Activated CD4-positive, alpha-beta T cell treated with anti-CD3 and anti-CD28 coated beads for 36 hours (primary cell): ENCODE measurements at regions of chr9 and their contacts with region 1.

Region 1: GRCh38 chr9:87464110-87464965 is 33.3 kb upstream of the DAPK1 start:
- DNase-seq: peak; percentile 66
- ATAC-seq: peak; percentile 89
- H3K4me3 Mint-ChIP-seq: no peak overlapping the region
- H3K27ac Mint-ChIP-seq: peak overlapping the region; percentile 84
- H3K4me1 Mint-ChIP-seq: peaks cover 28% of the 10 kb centered on the region
- H3K27me3 Mint-ChIP-seq: peaks cover 2% of the 10 kb centered on the region

Region 2: DNA sequence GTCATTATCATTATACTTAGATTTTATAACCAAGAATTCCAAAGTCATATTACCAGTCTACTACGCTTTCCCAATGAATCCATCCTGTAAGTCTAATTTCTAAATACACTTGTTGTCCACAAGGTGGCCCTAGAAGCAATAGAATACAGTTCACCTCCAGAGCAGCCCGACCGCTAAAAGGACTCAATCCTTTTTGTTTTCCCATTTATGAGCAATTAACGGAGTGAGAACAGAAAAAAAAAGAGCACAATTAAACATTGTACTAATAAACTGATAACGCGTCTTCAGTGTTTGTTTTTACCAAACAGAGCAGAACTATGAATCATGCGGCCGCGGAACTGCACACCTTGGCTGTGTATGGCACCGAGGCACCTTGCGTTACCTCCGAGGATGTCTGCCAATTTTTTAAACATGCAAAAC is 127.4 kb before region 1 on chr9:
- CTCF ChIA-PET with region 1: interaction called, 3 read pairs
- POLR2A ChIA-PET with region 1: interaction called, 3 read pairs
- intact Hi-C with region 1: loop called in 1 of 2 experiments (anchors 1 kb)
- DNase-seq: peak; percentile 49
- ATAC-seq: peak; percentile 57
- H3K4me3 Mint-ChIP-seq: peak overlapping the region; percentile 41
- H3K27ac Mint-ChIP-seq: peak overlapping the region; percentile 38
- H3K4me1 Mint-ChIP-seq: peaks cover 13% of the 10 kb centered on the region
- H3K27me3 Mint-ChIP-seq: peaks cover 47% of the 10 kb centered on the region

Region 3: DNA sequence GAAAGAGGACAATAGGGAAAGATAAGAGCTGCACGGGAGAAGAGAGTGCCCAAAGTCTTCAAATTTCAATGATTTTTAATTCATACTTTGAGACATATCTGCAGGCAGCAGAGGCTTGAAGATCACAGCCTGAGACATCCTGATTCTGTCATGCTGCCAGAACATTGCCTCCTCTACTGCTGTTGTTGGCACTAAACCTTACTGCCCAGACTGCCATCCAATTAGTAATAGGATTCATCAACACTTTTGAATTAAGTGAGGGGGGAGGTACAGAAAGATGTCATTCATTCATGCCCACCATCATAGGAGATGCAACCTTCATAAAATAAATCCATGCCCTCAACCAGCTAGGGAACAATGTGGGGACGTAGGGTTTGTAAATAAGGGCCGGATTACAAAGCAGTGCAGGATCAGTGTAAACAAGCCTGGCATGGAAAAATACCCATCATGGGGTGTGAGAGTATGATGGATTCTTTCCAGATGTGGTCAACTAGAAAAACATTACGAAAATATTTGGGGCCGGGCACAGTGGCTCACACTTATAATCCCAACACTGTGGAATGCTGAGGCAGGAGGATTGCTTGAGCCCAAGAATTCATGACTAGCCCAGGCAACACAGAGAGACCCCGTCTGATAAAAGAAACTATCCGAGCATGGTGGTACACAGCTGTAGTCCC is 88.8 kb before region 1 on chr9:
- CTCF ChIA-PET with region 1: interaction called, 12 read pairs
- POLR2A ChIA-PET with region 1: interaction called, 3 read pairs
- intact Hi-C with region 1: loop called (anchors 1 kb)
- DNase-seq: no peak
- ATAC-seq: no peak
- H3K4me3 Mint-ChIP-seq: no peak overlapping the region
- H3K27ac Mint-ChIP-seq: no peak overlapping the region
- H3K4me1 Mint-ChIP-seq: peaks cover 15% of the 10 kb centered on the region
- H3K27me3 Mint-ChIP-seq: peaks cover 37% of the 10 kb centered on the region

Region 4: GRCh38 chr9:87497604-87498045 is 33.3 kb after region 1 on chr9 and contains the start of gene DAPK1:
- CTCF ChIA-PET with region 1: interaction called, 5 read pairs
- POLR2A ChIA-PET with region 1: no interaction called
- intact Hi-C with region 1: loop called (anchors 1 to 2 kb)
- DNase-seq: peak; percentile 60
- ATAC-seq: peak; percentile 61
- H3K4me3 Mint-ChIP-seq: peak within 1 kb of the TSS; percentile 70
- H3K27ac Mint-ChIP-seq: no peak within 1 kb of the TSS
- H3K4me1 Mint-ChIP-seq: peaks cover 24% of the 10 kb centered on the region
- H3K27me3 Mint-ChIP-seq: peaks cover 52% of the 10 kb centered on the region
- total RNA-seq, gene DAPK1: 3.9 to 5.6 TPM

Region 5: DNA sequence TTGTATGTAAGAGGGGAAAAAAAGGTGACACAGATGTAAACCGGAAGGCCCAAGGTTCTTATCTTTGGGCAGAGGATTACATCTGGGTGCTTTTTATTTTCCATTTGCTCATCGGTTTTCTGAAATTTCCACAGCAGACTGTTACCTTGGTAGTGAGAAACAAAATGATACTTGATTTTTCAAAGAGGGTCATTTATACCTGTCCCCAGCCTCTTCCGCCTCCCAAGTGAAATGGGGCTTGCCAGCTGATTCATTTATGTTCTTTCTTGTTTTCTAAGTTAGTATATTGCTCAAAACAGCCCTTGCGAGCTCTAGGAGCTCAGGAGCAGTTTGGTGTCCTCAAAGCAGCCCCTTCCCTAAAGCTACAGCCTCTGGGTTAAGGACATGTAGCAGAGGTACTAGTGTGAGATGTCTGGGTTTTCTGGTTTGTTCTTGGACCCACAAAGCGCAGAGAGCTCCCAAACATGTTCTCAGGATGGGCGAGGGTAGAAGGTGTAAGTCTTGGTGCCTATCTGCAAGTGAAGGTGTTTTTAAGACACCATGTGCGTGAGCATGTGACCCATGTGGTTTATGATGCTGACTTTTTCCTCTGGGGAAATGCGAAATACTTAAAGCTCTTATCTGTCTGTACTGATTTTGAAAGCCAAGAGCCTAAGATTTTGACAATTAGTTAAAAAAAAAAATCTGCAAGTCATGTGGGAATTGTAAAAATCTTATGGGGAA is 71.6 kb after region 1 on chr9:
- CTCF ChIA-PET with region 1: no interaction called
- POLR2A ChIA-PET with region 1: interaction called, 9 read pairs
- intact Hi-C with region 1: loop called (anchors 1 kb)
- DNase-seq: peak; percentile 69
- ATAC-seq: peak; percentile 84
- H3K4me3 Mint-ChIP-seq: peak overlapping the region; percentile 5
- H3K27ac Mint-ChIP-seq: peak overlapping the region; percentile 91
- H3K4me1 Mint-ChIP-seq: peaks cover 13% of the 10 kb centered on the region
- H3K27me3 Mint-ChIP-seq: no peaks in the 10 kb centered on the region

Region 6: GRCh38 chr9:87547667-87548066 is 83.3 kb after region 1 on chr9:
- CTCF ChIA-PET with region 1: no interaction called
- POLR2A ChIA-PET with region 1: no interaction called
- intact Hi-C with region 1: no loop called
- DNase-seq: no peak
- ATAC-seq: no peak
- H3K4me3 Mint-ChIP-seq: no peak overlapping the region
- H3K27ac Mint-ChIP-seq: no peak overlapping the region
- H3K4me1 Mint-ChIP-seq: peaks cover 5% of the 10 kb centered on the region
- H3K27me3 Mint-ChIP-seq: peaks cover 6% of the 10 kb centered on the region

Region 7: DNA sequence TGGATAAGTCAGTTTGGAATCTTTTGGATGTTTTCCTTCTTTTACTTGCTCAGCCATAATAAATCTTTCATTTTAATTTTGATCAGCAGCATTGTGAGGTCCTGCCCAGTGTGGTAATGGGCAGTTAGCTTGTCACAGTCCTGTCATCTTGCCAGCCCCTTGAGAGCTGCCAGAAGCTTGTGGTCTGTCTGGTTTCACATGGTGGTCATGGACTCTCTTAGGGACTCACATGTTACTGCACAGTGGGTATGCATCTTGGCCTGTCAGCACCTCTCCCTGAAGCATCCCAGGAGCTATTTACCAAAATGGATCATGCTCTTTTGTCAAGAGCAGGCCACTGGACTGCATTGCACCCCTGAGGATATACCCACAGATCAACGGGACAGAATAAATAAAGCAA is 93.7 kb after region 1 on chr9:
- CTCF ChIA-PET with region 1: no interaction called
- POLR2A ChIA-PET with region 1: no interaction called
- intact Hi-C with region 1: no loop called
- DNase-seq: no peak
- ATAC-seq: no peak
- H3K4me3 Mint-ChIP-seq: no peak overlapping the region
- H3K27ac Mint-ChIP-seq: no peak overlapping the region
- H3K4me1 Mint-ChIP-seq: peaks cover 4% of the 10 kb centered on the region
- H3K27me3 Mint-ChIP-seq: no peaks in the 10 kb centered on the region

Region 8: GRCh38 chr9:87707805-87708506 is 243.6 kb after region 1 on chr9:
- CTCF ChIA-PET with region 1: no interaction called
- POLR2A ChIA-PET with region 1: no interaction called
- intact Hi-C with region 1: loop called in 1 of 2 experiments (anchors 1 kb)
- DNase-seq: peak; percentile 31
- ATAC-seq: peak; percentile 40
- H3K4me3 Mint-ChIP-seq: no peak overlapping the region
- H3K27ac Mint-ChIP-seq: no peak overlapping the region
- H3K4me1 Mint-ChIP-seq: peaks cover 44% of the 10 kb centered on the region
- H3K27me3 Mint-ChIP-seq: peaks cover 5% of the 10 kb centered on the region